GM12878 (cell line): ENCODE measurements at regions of chr7 and their contacts with region 1.

Region 1: GRCh38 chr7:137929221-137929620 is 72.7 kb downstream of the CREB3L2 start:
- DNase-seq: no peak
- ATAC-seq: no peak
- H3K4me3 ChIP-seq: no peak overlapping the region
- H3K27ac ChIP-seq: no peak overlapping the region
- H3K4me1 ChIP-seq: peaks cover 15% of the 10 kb centered on the region
- H3K27me3 ChIP-seq: no peaks in the 10 kb centered on the region
- CTCF ChIP-seq: no peak
- EP300 ChIP-seq: no peak
- POLR2A ChIP-seq: no peak
- RAD21 ChIP-seq: no peak

Region 2: DNA sequence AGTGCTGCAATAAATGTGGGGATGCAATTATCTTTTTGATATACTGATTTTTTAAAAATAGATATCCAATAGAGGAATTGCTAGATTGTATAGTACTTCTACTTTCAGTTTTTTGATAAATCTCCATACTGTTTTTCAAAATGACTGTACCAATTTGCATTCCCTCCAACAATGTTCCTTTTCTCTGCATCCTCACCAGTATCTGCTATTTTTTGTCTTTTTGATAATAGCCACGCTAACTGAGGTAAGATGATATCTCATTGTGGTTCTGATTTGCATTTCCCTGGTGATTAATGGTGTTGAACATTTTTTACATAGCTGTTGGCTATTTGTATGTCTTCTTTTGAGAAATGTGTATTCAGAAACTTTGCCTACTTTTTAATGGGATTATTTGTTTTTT is 1734.3 kb before region 1 on chr7:
- CTCF ChIA-PET with region 1: no interaction called
- POLR2A ChIA-PET with region 1: no interaction called
- RAD21 ChIA-PET with region 1: no interaction called
- SMC1A ChIA-PET with region 1: no interaction called
- in situ Hi-C with region 1: no loop called
- intact Hi-C with region 1: loop called (anchors 5 kb)
- DNase-seq: no peak
- ATAC-seq: no peak
- H3K4me3 ChIP-seq: no peak overlapping the region
- H3K27ac ChIP-seq: no peak overlapping the region
- H3K4me1 ChIP-seq: no peaks in the 10 kb centered on the region
- H3K27me3 ChIP-seq: no peaks in the 10 kb centered on the region
- CTCF ChIP-seq: no peak
- EP300 ChIP-seq: no peak
- POLR2A ChIP-seq: no peak
- RAD21 ChIP-seq: no peak